Stomach (tissue), 19 donors: ENCODE measurements at regions of chr22 and their contacts with region 1.

Region 1: DNA sequence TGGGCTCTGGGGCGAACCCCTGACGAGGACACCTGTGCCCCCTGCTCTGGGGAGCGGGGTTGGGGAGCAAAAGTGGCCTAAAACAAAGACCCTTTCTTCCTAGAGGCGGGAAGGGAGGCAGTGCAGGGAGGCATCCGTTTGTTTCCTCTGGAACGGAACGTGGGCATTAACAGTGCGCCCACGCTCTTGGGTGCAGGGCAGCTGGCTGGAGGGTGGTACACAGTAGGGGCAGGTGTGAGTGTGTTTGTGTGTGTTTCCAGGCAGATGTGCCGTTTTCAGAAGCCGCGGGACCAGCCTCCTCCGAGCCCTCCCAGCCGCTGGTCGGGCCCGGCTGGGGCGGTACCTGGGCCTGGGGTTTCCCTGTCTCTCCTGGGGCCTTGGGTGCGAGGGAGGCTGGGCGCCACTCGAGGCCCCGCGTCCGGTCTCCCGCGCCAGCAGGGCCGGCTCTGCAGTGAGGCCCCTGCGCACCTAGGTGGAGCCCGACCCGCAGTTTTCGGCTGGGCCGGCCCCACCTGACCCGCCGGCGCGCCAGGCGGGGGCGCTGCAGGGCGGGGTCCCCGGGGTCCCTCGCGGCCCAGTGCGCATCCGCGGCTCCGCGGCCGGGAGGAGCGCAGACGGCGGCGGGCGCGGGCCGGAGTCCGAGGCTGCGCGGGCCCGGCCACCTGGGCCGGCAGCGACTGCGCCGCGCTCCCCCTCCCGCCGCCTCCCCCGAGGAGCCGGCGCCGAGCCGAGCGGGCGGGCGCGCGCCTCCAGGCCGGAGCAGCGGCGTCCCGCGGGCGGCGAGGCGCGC is 1252.7 kb downstream of the BRD1 start:
- DNase-seq: peak in 1 of 2 donors; percentile 87
- H3K4me3 ChIP-seq: peak overlapping the region in 2 of 4 donors; percentile 9 to 18
- H3K27ac ChIP-seq: no peak overlapping the region
- H3K4me1 ChIP-seq: peaks cover 3 to 25% (median 14%) of the 10 kb centered on the region in 4 donors
- H3K27me3 ChIP-seq: peaks cover 14 to 67% (median 29%) of the 10 kb centered on the region in 3 donors
- CTCF ChIP-seq: peak in 2 of 7 experiments; percentile 34 to 50
- EP300 ChIP-seq: no peak
- POLR2A ChIP-seq: no peak

Region 2: DNA sequence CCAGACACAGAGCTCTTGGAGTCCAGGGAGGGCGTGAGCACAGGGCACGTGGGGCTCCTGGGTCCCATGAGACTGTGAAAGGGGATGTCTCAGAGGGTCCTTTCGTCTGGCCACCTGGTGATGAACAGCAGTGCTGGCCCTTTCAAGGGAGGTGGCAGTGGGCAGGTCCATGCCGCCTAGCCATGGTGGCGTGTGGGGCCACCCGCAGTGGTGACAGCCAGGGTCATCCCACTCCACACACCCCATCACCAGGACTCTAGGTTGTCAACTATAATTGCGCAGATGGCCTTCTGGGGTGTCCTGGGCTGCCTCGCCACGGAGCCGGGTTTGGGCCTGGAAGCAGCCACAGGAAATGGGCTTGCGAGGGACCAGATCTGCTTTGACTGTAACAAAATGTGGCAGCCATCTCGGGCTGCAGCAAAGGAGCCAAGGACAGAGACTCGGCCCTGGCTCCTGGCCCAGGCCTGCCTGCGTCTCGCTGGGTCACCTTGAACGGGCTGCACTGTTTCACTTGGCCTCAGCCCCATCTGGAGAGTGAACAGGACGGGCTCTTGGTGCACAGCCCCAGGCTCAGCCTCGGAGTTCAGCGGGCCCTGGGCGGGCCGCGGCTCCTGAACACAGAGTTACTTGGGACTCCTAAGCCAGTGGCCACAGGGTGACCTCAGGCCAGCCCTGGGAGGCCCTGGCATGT is 97.8 kb before region 1 on chr22:
- intact Hi-C with region 1: no loop called
- DNase-seq: peak in 1 of 2 donors; percentile 37
- H3K4me3 ChIP-seq: no peak overlapping the region
- H3K27ac ChIP-seq: no peak overlapping the region
- H3K4me1 ChIP-seq: no peaks in the 10 kb centered on the region
- H3K27me3 ChIP-seq: peaks cover 0 to 63% (median 5%) of the 10 kb centered on the region in 3 donors
- CTCF ChIP-seq: no peak
- EP300 ChIP-seq: no peak
- POLR2A ChIP-seq: no peak

Region 3: GRCh38 chr22:48807155-48807554 is 232.2 kb after region 1 on chr22:
- intact Hi-C with region 1: no loop called
- DNase-seq: no peak
- H3K4me3 ChIP-seq: no peak overlapping the region
- H3K27ac ChIP-seq: no peak overlapping the region
- H3K4me1 ChIP-seq: no peaks in the 10 kb centered on the region
- H3K27me3 ChIP-seq: peaks cover 0 to 61% (median 0%) of the 10 kb centered on the region in 3 donors
- CTCF ChIP-seq: no peak
- EP300 ChIP-seq: no peak
- POLR2A ChIP-seq: no peak

Region 4: DNA sequence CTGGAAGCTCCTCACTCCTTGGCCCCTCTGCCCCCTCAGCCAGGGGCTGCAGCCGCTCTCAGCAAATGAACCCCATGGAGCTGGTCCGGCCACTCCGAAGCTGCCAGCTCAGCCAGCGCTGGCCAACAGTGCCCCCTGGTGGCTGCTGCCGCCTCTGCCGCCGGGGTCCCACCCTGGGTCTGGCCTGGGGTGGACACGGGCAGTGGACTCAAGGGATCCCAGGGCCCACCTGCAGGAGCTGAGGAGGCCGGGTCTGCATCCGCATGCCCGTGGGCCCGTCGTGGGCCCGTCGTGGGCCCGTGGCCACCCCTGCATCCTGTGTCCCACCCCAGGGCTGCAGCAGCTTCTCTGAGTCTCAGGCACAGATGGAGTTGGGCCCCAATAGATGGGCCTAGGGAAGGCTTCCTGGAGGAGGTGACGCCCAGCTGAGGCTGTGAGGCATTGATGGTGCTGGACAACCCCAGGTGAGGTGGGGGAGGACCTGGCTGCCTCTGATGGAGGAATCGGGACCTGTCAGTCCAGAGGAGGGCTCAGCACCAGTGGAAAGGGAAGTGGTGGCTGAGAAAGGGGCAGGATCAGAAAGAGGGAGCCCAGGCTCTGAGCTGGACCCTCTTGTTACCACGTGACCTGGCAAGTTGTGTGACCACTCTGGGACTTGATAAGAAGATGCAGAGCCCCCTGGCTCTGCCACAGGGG is 730.4 kb after region 1 on chr22:
- intact Hi-C with region 1: loop called (anchors 10 kb)
- DNase-seq: peak; percentile 40 to 87
- H3K4me3 ChIP-seq: no peak overlapping the region
- H3K27ac ChIP-seq: no peak overlapping the region
- H3K4me1 ChIP-seq: peaks cover 0 to 8% (median 3%) of the 10 kb centered on the region in 4 donors
- H3K27me3 ChIP-seq: peaks cover 0 to 84% (median 32%) of the 10 kb centered on the region in 3 donors
- CTCF ChIP-seq: peak in 5 of 7 experiments; percentile 45 to 79 (median 72)
- EP300 ChIP-seq: no peak
- POLR2A ChIP-seq: no peak

Region 5: DNA sequence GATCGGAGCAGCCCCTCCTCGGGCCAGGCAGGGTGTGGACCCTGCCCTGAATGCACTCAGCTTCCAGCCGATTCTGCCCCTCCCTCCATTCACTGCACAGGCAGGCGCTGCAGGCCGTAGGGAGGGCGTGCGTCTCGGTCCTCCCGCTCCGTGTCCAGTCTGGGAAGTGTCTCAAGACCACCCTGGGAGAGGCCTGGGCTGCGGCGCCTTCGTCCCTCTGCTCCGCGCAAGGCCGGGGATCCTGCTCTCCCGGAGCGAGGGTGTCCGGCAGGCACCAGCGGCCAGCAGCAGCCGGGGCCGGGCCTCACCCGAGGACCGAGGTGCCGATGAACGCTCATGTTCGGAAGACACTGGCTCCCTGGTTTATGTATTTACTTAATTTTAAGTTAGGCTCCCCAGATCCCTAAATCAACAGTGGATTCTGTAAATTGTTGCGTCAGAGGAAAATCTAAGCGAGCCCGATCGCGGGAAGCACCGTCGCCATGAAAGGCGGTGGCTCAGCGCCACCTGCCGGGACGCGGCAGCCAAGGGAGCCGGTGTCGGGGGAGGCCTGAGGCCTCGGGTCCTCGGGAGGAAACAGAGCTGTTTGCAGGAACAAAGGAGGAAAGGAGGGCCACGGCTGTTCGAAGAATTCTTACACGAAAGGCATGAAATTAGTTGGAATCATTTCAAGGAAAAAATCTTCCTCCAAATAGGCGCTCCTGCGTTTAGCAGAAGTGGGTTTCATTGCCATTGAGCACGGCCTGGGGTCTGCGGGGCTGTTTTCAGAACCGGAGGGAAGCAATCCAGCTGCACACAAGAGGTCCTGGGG is 1057.4 kb after region 1 on chr22:
- intact Hi-C with region 1: loop called (anchors 10 kb)
- DNase-seq: peak; percentile 55 to 91
- H3K4me3 ChIP-seq: peak overlapping the region; percentile 32 to 49 (median 34)
- H3K27ac ChIP-seq: peak overlapping the region in 1 of 5 donors; percentile 21
- H3K4me1 ChIP-seq: peaks cover 5 to 13% (median 9%) of the 10 kb centered on the region in 4 donors
- H3K27me3 ChIP-seq: peaks cover 0 to 47% (median 0%) of the 10 kb centered on the region in 3 donors
- CTCF ChIP-seq: peak in 5 of 7 experiments; percentile 40 to 71 (median 59)
- EP300 ChIP-seq: no peak
- POLR2A ChIP-seq: no peak